PC-3 (cell line): ENCODE measurements at regions of chr5 and their contacts with region 1.

Region 1: GRCh38 chr5:109479260-109479860 is 69.6 kb upstream of the PJA2 start:
- DNase-seq: peak; percentile 26
- ATAC-seq: no peak
- H3K4me3 ChIP-seq: no peak overlapping the region
- H3K27ac ChIP-seq: no peak overlapping the region
- H3K4me1 ChIP-seq: no peaks in the 10 kb centered on the region
- H3K27me3 ChIP-seq: no peaks in the 10 kb centered on the region
- CTCF ChIP-seq: peak; percentile 54

Region 2: DNA sequence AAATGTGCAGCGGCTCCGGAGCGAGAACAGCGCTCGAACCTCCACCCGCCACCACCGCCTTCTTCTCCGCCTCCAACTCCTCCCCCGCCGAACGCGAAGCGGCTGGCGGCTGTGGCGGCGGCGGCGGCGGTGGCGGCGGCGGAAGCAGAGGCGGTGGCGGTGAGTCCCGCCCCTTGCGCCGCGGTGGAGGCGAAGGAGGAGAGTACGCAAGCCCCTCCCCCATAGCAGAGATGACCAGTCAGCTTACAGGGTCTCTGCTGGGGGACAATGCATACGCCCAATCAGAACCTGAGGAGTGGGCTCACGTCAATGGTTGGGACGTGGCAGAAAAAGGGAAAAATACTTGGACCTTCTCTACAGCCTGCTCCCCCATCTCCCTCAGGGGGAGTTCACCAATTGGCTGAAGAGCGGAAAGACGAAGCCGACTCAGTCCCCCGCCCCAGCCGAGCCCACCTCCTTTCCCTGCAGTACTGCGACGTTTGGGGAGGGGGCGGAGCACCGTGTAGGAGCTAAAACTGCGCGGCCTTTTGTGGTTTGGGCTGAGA is 69.4 kb before region 1 on chr5 and contains the start of gene PJA2:
- CTCF ChIA-PET with region 1: no interaction called
- POLR2A ChIA-PET with region 1: no interaction called
- intact Hi-C with region 1: no loop called
- DNase-seq: peak; percentile 99
- ATAC-seq: peak; percentile 83
- H3K4me3 ChIP-seq: peak within 1 kb of the TSS; percentile 88
- H3K27ac ChIP-seq: peak within 1 kb of the TSS; percentile 61
- H3K4me1 ChIP-seq: peaks cover 28% of the 10 kb centered on the region
- H3K27me3 ChIP-seq: no peaks in the 10 kb centered on the region
- CTCF ChIP-seq: no peak
- total RNA-seq, gene PJA2: 12.8 and 14.3 TPM in 2 replicates

Region 3: GRCh38 chr5:109656829-109657228 is 177.5 kb after region 1 on chr5:
- CTCF ChIA-PET with region 1: no interaction called
- POLR2A ChIA-PET with region 1: no interaction called
- intact Hi-C with region 1: loop called (anchors 10 kb)
- DNase-seq: peak; percentile 93
- ATAC-seq: peak; percentile 87
- H3K4me3 ChIP-seq: no peak overlapping the region
- H3K27ac ChIP-seq: peak overlapping the region; percentile 54
- H3K4me1 ChIP-seq: peaks cover 41% of the 10 kb centered on the region
- H3K27me3 ChIP-seq: no peaks in the 10 kb centered on the region
- CTCF ChIP-seq: no peak